ENCODE measurements at regions of chr10 and their contacts with region 1.

Region 1: DNA sequence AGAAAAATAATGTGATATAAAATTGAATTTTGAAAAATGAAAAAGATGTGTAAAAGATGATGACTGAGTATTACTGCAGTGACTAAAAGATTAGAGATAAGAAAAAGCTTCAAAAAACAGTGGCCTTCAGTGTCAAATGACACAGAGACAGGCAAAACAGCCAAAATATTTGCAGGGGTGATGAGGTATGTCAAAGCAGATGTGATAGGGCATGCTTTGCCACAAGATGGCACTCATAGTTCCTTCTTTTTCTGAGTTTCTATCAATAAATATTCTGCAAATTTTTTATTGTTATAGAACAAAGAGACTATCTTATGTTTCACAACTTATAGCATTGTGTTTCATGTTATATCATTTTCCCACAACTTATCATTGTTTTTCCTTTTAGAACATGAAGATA is 344.1 kb upstream of the HPS1 start:
- DNase-seq: peak; percentile 18
- H3K4me3 Mint-ChIP-seq: no peak overlapping the region
- H3K27ac Mint-ChIP-seq: no peak overlapping the region
- H3K4me1 Mint-ChIP-seq: no peaks in the 10 kb centered on the region
- H3K27me3 Mint-ChIP-seq: peaks cover 22% of the 10 kb centered on the region
- CTCF ChIP-seq: peak; percentile 41

Region 2: DNA sequence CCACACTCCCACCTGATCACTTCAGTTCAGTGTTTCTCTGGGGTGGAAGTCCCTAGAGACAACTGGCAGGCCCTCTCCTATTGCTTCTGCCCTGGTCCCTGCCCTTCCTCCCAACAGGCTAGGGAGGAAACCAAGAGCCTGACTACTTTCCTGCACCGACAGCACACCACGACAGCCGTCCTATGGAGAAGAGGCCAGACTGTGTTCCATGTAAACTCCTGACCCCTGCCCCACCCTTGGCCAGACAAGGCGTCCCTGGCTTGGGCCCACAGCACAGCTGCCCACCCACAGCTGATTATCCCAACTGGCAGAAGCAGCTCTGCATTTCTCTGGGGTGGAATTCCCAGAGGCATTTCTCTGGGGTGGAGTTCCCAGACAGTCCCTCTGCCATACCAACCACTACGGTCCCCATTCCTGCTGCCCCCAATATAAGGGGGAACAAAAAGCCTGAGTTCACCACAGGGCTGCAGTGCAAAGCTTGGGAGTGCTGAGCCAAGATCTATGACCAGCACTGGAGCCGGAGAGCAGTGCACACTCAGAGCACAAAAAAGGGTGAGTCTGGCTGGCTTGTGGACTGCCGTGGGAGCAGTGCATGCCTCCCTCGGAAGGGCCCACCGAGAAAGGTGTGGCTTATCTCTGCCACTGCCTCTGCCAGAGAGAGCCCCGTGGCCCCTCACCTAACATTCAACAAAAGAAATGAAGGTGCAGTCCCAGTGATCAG is 251.4 kb after region 1 on chr10:
- CTCF ChIA-PET with region 1: no interaction called
- POLR2A ChIA-PET with region 1: no interaction called
- intact Hi-C with region 1: loop called (anchors 5 kb)
- DNase-seq: no peak
- H3K4me3 Mint-ChIP-seq: no peak overlapping the region
- H3K27ac Mint-ChIP-seq: no peak overlapping the region
- H3K4me1 Mint-ChIP-seq: no peaks in the 10 kb centered on the region
- H3K27me3 Mint-ChIP-seq: no peaks in the 10 kb centered on the region
- CTCF ChIP-seq: no peak

Region 3: DNA sequence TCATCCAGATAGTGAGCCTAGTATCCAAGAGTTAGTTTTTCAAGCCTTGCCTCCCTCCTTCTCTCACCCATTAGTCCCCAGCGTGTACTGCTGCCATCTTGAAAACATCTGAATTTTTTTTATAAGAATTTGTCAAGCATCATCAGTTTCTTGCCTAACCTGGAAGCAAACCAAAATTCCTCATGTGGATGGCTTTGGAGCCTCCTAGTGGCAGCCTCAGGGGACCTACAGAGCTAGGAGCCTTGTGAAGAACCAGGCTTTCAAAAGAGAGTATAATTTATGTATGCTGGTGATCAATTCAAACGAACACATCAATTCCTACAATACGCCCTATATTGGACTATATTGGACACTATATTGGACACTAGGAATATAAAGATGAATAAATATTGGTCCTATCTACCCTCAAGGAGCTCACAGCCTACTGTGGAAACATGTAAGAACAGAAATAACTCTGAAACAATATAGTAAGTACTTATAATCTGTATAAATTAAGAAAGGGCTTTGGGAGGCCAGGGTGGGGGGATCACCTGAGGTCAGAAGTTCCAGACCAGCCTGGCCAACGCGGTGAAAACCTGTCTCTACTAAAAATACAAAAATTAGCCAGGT is 381.4 kb after region 1 on chr10:
- CTCF ChIA-PET with region 1: no interaction called
- POLR2A ChIA-PET with region 1: no interaction called
- intact Hi-C with region 1: loop called (anchors 5 kb)
- DNase-seq: peak; percentile 65
- H3K4me3 Mint-ChIP-seq: no peak overlapping the region
- H3K27ac Mint-ChIP-seq: no peak overlapping the region
- H3K4me1 Mint-ChIP-seq: no peaks in the 10 kb centered on the region
- H3K27me3 Mint-ChIP-seq: peaks cover 46% of the 10 kb centered on the region
- CTCF ChIP-seq: peak; percentile 54

Region 4: GRCh38 chr10:99370993-99371392 is 580.2 kb after region 1 on chr10:
- CTCF ChIA-PET with region 1: no interaction called
- POLR2A ChIA-PET with region 1: no interaction called
- intact Hi-C with region 1: loop called (anchors 5 kb)
- DNase-seq: peak; percentile 43
- H3K4me3 Mint-ChIP-seq: no peak overlapping the region
- H3K27ac Mint-ChIP-seq: no peak overlapping the region
- H3K4me1 Mint-ChIP-seq: peaks cover 11% of the 10 kb centered on the region
- H3K27me3 Mint-ChIP-seq: peaks cover 42% of the 10 kb centered on the region
- CTCF ChIP-seq: peak; percentile 47

Measured in MCF 10A (cell line).